ENCODE measurements at regions of chr14 and their contacts with region 1.

Region 1: DNA sequence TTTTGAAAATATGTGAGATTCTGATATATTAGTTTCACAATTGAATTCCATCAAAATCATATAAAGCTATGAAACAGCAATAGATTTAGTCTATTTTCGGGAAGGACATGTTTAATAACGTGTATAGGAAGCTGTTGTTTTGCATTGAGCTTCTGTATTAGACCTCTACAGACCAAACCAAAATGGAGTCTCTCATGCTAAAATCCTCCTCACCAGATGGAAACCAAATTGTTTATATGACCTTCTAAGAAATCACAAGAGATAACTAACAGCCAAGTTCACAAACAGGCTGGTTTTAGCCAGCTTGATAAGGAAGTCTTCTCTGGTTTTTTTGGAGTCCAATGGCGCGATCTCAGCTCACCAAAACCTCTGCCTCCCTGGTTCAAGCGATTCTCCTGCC is 23.9 kb downstream of the L2HGDH start:
- DNase-seq: no peak
- H3K27ac ChIP-seq: no peak overlapping the region
- CTCF ChIP-seq: no peak

Region 2: DNA sequence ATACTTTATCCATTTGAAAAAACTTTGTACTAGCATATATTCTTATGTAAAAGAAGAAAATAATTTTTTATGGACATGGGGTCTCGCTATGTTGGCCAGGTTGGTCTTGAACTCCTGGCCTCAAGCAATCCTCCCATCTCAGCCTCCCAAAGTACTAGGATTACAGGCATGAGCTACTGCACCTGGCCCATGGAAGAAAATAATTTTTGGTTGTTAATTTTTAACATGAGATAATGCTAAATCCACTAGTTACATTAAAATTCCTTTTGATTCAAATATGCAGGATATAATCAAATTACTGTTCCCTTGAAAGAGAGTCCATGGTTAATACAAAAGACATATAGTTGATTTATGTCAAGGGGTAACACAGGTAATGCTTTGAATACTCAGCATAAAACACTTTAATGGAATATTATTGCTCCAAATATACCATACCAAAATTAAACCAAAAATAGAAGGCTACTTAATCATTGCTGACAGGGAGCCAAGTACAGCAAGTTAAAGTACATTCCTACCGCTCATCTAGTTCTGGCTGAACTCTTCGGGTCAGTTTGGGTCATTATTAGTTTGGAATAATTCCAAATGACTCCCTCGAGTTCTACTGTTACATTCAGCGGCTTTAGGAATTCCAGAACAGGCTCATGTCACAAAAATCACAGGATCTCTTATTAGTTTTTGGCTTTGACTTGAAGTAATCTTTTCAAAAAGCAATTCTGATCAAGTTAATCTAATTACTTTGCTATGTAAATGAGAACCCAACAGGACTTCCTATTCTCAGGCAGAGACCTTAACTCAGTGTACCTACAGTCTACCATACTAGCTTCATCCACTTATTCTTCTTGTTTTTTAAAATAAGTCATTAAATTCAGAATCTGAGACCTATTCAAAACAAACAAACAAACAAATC is 62.8 kb before region 1 on chr14:
- CTCF ChIA-PET with region 1: no interaction called
- POLR2A ChIA-PET with region 1: interaction called, 13 read pairs
- DNase-seq: peak; percentile 64
- H3K27ac ChIP-seq: 0 out of 2 replicates have a peak overlapping the region, but pooled peaks have one; percentile 42
- CTCF ChIP-seq: no peak

Measured in RWPE1 (cell line).